ENCODE measurements at regions of chr4 and their contacts with region 1.

Region 1: DNA sequence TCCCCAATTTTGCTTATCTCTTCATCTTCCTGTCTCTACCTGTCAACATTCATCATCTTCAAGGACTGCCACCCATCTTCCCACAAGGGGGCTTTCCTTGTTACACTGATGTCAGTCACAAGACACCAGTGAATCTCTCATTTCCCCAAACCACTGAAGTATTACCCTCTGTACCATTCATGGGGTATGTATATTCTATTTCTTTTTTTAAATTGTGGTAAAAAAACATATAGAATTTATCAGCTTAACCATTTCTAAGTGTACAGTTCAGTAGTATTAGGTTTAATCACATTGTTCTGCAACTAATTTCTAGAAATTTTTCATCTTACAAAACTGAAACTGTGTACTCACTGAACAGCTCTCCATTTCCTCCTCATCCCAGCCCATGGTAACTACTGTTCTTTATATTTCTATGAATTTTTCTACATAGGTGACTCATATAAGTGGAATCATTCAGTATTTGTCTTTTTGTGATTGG is 98.6 kb downstream of the LARP7 start:
- DNase-seq: no peak
- H3K4me3 Mint-ChIP-seq: peak overlapping the region; percentile 3
- H3K27ac Mint-ChIP-seq: peak overlapping the region; percentile 50
- H3K4me1 Mint-ChIP-seq: peaks cover 13% of the 10 kb centered on the region
- H3K27me3 Mint-ChIP-seq: no peaks in the 10 kb centered on the region

Region 2: GRCh38 chr4:112189754-112190153 is 545.8 kb before region 1 on chr4:
- intact Hi-C with region 1: loop called (anchors 10 kb)
- DNase-seq: no peak
- H3K4me3 Mint-ChIP-seq: no peak overlapping the region
- H3K27ac Mint-ChIP-seq: no peak overlapping the region
- H3K4me1 Mint-ChIP-seq: peaks cover 7% of the 10 kb centered on the region
- H3K27me3 Mint-ChIP-seq: no peaks in the 10 kb centered on the region

Region 3: DNA sequence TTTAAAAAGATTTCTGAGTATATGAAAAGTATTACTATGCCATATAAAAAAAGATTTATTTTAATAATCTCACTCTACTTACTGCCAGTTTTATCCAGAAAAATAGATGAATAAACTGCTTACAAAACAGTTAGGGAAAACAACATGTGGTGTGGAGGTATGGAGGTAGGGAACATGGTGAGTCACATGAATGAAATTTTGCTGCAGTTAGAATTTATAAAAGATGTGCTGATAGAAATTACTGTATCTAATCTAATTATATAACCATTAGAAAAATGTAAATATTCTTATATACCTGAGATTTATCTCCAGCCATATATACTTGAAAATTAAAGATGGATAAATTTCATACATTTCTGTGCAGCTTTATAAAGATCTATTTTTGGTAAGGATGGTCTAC is 129.9 kb after region 1 on chr4:
- intact Hi-C with region 1: no loop called
- DNase-seq: no peak
- H3K4me3 Mint-ChIP-seq: no peak overlapping the region
- H3K27ac Mint-ChIP-seq: no peak overlapping the region
- H3K4me1 Mint-ChIP-seq: no peaks in the 10 kb centered on the region
- H3K27me3 Mint-ChIP-seq: peaks cover 2% of the 10 kb centered on the region